H1 (cell line): ENCODE measurements at regions of chr5 and their contacts with region 1.

Region 1: GRCh38 chr5:141878711-141879425 is 658 bp upstream of the PCDH1 start:
- DNase-seq: peak in 1 of 2 experiments; percentile 92
- H3K4me3 ChIP-seq: peak overlapping the region; percentile 49 to 81 (median 66)
- H3K27ac ChIP-seq: peak overlapping the region; percentile 75
- H3K4me1 ChIP-seq: peaks cover 24 to 64% (median 47%) of the 10 kb centered on the region in 4 experiments
- H3K27me3 ChIP-seq: peaks cover 0 to 4% (median 0%) of the 10 kb centered on the region in 4 experiments; a peak in 1 of 7 replicates
- CTCF ChIP-seq: peak in 2 of 3 experiments; percentile 87 to 98; a peak in 3 of 4 replicates
- EP300 ChIP-seq: no peak
- POLR2A ChIP-seq: no peak; a peak in 1 of 3 replicates
- RAD21 ChIP-seq: peak; percentile 92 to 94

Region 2: GRCh38 chr5:141657937-141658545 is 220.8 kb before region 1 on chr5:
- CTCF ChIA-PET with region 1: interaction called, 12 read pairs
- POLR2A ChIA-PET with region 1: interaction called, 4 read pairs
- DNase-seq: no peak
- H3K4me3 ChIP-seq: no peak overlapping the region
- H3K27ac ChIP-seq: no peak overlapping the region
- H3K4me1 ChIP-seq: no peaks in the 10 kb centered on the region; a peak in 2 of 7 replicates
- H3K27me3 ChIP-seq: no peaks in the 10 kb centered on the region
- CTCF ChIP-seq: no peak
- EP300 ChIP-seq: no peak
- POLR2A ChIP-seq: no peak
- RAD21 ChIP-seq: no peak

Region 3: GRCh38 chr5:141701360-141702119 is 177.3 kb before region 1 on chr5:
- CTCF ChIA-PET with region 1: interaction called, 125 read pairs
- POLR2A ChIA-PET with region 1: interaction called, 15 read pairs
- DNase-seq: no peak
- H3K4me3 ChIP-seq: peak overlapping the region in 1 of 4 experiments; percentile 73; a peak in 1 of 8 replicates
- H3K27ac ChIP-seq: no peak overlapping the region
- H3K4me1 ChIP-seq: peaks cover 5 to 9% (median 5%) of the 10 kb centered on the region in 4 experiments
- H3K27me3 ChIP-seq: peaks cover 0 to 36% (median 30%) of the 10 kb centered on the region in 4 experiments; a peak in 6 of 7 replicates
- CTCF ChIP-seq: no peak
- EP300 ChIP-seq: no peak
- POLR2A ChIP-seq: no peak
- RAD21 ChIP-seq: no peak

Region 4: GRCh38 chr5:141778206-141778605 is 100.7 kb before region 1 on chr5:
- CTCF ChIA-PET with region 1: interaction called, 18 read pairs
- POLR2A ChIA-PET with region 1: interaction called, 3 read pairs
- DNase-seq: no peak
- H3K4me3 ChIP-seq: no peak overlapping the region
- H3K27ac ChIP-seq: no peak overlapping the region
- H3K4me1 ChIP-seq: peaks cover 0 to 10% (median 6%) of the 10 kb centered on the region in 4 experiments; a peak in 6 of 7 replicates
- H3K27me3 ChIP-seq: no peaks in the 10 kb centered on the region
- CTCF ChIP-seq: no peak
- EP300 ChIP-seq: no peak
- POLR2A ChIP-seq: no peak
- RAD21 ChIP-seq: no peak

Region 5: DNA sequence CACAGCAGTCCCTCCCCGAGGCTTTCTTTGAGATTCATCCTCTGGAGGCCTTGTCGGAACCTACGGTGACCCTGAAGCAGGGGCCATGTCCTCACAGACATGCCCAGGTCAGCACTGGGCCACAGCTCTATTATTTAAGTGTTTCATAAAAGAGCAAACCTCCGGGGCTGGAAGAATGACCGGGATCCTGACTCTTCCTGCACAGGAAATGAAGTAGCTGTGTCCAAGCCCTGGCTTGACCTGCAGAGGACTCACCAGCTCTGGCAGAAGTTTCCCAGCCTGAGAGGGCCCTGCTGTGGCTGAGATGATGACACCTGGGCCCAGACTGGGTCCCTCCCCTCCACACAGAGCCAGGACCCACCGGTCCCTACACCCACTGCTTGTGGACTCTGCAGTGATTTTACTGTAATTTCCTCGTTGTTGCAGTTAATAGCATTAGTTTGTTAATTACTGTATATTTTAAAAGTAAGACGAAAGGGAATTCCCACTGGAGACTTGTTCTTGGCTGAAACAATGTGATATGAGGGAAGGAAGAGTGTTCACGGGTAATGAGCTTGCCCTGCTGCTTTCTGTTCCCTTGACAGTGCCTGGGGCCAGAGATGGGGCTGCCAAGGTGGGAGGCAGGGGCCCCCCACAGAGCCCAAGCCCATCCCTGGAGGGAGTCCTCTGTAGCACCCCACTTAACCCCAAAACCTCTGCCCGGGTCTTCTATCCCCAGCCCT is 72.8 kb before region 1 on chr5:
- CTCF ChIA-PET with region 1: interaction called, 265 read pairs
- POLR2A ChIA-PET with region 1: interaction called, 41 read pairs
- DNase-seq: no peak
- H3K4me3 ChIP-seq: no peak overlapping the region
- H3K27ac ChIP-seq: no peak overlapping the region
- H3K4me1 ChIP-seq: peaks cover 11 to 39% (median 17%) of the 10 kb centered on the region in 4 experiments
- H3K27me3 ChIP-seq: no peaks in the 10 kb centered on the region; a peak in 1 of 7 replicates
- CTCF ChIP-seq: no peak
- EP300 ChIP-seq: no peak
- POLR2A ChIP-seq: no peak
- RAD21 ChIP-seq: no peak

Region 6: DNA sequence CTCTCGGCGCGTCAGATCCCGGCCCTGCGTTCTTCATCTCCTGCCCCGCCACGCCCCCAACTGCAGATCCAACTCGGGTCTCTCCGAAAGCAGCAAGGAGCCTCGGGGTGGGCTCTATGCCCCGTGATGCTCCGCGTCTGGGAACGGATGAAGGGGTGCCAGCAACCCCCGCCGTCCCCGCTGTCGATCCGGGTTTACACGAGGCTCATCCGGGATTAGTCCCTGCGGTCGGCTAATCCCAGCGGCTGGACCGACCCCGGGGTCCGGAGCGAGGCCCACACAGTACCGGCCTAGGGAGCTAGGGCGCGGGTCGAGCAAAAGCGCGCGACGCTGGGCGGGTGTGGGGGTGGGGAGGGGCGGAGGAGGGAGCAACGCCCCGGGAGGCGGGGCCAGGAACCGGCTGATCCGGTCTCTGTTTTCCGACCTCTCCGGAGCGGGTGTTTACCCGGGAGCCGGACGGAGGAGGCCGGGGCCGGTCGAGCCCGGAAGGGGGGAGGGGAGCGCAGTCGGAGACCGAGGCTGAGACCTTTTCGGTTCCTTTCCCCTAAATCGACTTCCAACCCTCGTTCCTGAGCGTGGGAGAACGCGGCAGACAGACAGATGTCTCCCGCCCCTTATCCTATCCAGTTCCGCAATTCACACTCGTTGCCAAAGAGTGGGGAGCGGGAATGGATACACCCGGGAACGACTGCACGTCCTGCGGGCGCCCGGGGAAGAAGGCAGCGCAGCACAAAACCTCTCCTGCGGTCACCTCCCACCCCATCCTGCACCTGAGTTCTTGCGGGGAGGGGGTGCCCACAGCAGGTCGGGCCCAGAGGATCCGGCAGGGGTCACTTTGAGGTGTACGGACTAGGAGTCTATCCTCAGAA is 29.3 kb before region 1 on chr5:
- CTCF ChIA-PET with region 1: interaction called, 273 read pairs
- POLR2A ChIA-PET with region 1: interaction called, 210 read pairs
- DNase-seq: peak; percentile 58 to 93
- H3K4me3 ChIP-seq: peak overlapping the region; percentile 47 to 78 (median 70)
- H3K27ac ChIP-seq: peak overlapping the region; percentile 99
- H3K4me1 ChIP-seq: peaks cover 27 to 57% (median 46%) of the 10 kb centered on the region in 4 experiments
- H3K27me3 ChIP-seq: no peaks in the 10 kb centered on the region
- CTCF ChIP-seq: no peak
- EP300 ChIP-seq: peak in 1 of 2 experiments; percentile 82; a peak in 1 of 3 replicates
- POLR2A ChIP-seq: peak in 1 of 2 experiments; percentile 74; a peak in 2 of 3 replicates
- RAD21 ChIP-seq: no peak; a peak in 1 of 4 replicates

Region 7: DNA sequence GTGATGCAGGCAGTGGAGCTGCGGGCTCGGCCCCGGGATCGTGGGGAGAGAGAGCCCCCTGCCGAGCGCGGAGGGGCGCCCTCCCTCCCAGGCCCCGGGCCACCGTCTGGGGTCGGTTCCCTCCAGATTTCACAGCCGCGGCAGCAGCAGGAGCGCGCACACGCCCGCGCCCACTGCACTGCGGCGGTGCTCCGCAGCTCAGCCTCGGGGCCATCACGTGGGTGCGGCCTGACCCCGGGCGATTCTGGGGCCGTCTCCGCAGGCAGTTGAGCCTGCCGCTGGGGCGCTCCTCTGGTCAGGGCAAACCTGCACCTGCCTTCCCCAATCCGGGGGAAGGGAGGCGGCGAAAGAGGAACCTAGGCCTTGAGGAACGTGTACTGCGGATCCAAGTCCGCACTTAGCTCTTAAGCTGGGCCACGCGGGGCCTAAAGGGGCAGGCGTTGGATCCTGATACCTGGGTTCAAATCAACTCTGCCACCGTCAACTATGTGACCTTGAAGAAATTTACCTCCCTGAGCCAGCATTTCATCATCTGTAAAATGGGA is 35.4 kb after region 1 on chr5:
- CTCF ChIA-PET with region 1: interaction called, 58 read pairs
- POLR2A ChIA-PET with region 1: interaction called, 36 read pairs
- DNase-seq: peak in 1 of 2 experiments; percentile 77
- H3K4me3 ChIP-seq: peak overlapping the region; percentile 5 to 64 (median 47)
- H3K27ac ChIP-seq: no peak overlapping the region
- H3K4me1 ChIP-seq: peaks cover 4 to 10% (median 6%) of the 10 kb centered on the region in 4 experiments; a peak in 6 of 7 replicates
- H3K27me3 ChIP-seq: peaks cover 3 to 17% (median 7%) of the 10 kb centered on the region in 4 experiments
- CTCF ChIP-seq: peak in 2 of 3 experiments; percentile 12 to 13; a peak in 3 of 4 replicates
- EP300 ChIP-seq: 0 out of 3 replicates have a peak, but pooled peaks of 1 of the 2 experiments have one; percentile 21
- POLR2A ChIP-seq: peak in 1 of 2 experiments; percentile 50; a peak in 1 of 3 replicates
- RAD21 ChIP-seq: peak; percentile 36 to 45; a peak in 3 of 4 replicates

Region 8: DNA sequence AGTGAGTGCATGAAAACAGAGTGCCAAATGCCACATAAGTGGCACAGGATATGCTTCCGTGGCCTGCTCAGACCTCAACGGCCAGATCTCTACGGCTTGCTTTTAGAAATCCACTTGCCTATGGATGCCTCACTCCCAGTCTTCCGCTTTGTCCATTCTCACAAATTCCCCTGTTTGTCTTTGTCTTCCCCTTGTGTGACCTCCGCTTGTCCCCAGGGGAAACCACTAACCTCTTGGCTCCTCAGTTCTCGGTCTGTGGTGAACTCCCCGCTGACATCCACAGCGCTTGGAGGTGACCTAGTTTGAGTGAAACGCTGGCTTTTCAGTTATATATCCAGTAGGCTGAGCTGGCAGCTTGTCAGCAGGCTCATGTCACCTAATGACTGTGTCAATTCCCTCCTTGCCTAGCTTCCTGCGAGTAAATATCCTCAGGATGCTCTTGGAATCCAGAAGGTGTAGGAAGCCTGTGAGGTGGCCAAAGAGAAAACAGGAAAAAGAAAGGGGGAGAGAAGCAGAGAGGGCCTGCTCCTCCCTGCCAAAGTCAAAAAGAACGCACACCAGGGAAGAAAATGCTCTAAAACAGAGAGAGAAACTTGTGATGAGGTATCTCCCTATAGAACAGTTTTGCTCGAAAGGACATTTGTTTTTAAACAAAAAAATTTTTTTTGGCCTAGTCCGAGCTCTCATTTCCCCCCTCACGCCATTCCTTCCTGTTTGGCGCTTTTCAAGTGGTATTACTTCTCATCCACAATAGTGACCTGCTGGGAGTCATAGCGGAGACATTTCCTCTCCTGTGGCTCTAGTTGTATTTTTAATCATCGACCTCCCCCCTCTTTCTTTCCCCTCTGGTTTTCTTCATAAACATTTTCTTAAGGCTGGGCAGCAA is 547.5 kb after region 1 on chr5:
- CTCF ChIA-PET with region 1: no interaction called
- POLR2A ChIA-PET with region 1: no interaction called
- DNase-seq: no peak
- H3K4me3 ChIP-seq: no peak overlapping the region
- H3K27ac ChIP-seq: no peak overlapping the region
- H3K4me1 ChIP-seq: peaks cover 3 to 11% (median 6%) of the 10 kb centered on the region in 4 experiments
- H3K27me3 ChIP-seq: no peaks in the 10 kb centered on the region
- CTCF ChIP-seq: no peak
- EP300 ChIP-seq: no peak
- POLR2A ChIP-seq: no peak
- RAD21 ChIP-seq: no peak